Heart left ventricle (tissue), 16 donors: ENCODE measurements at regions of chr22 and their contacts with region 1.

Region 1: DNA sequence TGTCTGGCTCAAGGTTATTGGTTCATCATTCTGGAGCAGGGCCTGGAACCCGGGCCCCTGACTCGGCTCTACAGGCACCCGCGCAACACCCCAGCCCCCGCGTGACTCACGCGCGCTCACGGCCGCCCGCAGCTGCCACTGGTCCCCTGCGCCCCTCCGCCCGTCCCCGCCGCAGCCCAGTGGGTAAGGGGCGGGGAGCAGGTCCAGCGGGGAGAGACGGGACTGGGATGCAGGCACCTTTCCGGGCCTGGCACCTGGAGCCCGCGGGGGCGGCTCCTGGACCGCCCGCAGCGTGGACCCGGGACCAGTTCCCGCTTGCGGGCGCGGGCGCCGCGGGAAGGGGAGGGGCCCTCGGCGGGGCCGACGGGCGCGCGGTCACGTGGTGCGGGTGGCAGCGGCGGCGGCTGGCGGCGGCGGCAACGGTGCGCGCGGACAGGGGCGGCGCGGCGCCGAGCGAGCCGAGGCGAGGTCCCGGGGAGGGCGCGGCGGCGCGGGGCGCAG is 7.2 kb downstream of the SEPTIN3 start:
- DNase-seq: peak in 3 of 5 donors; percentile 27 to 66 (median 40)
- ATAC-seq: peak in 2 of 4 donors; percentile 41 to 74
- H3K4me3 ChIP-seq: peak overlapping the region; percentile 10 to 61 (median 42)
- H3K27ac ChIP-seq: no peak overlapping the region
- H3K4me1 ChIP-seq: peaks cover 0 to 12% (median 3%) of the 10 kb centered on the region in 12 donors
- H3K27me3 ChIP-seq: peaks cover 4 to 58% (median 31%) of the 10 kb centered on the region in 9 donors
- CTCF ChIP-seq: no peak
- POLR2A ChIP-seq: no peak

Region 2: GRCh38 chr22:41417622-41418390 is 558.6 kb before region 1 on chr22:
- intact Hi-C with region 1: no loop called
- DNase-seq: peak; percentile 89 to 97 (median 93)
- ATAC-seq: peak; percentile 73 to 88 (median 87)
- H3K4me3 ChIP-seq: peak overlapping the region in 1 of 12 donors; percentile 13
- H3K27ac ChIP-seq: peak overlapping the region; percentile 45 to 99 (median 92)
- H3K4me1 ChIP-seq: peaks cover 2 to 57% (median 34%) of the 10 kb centered on the region in 12 donors
- H3K27me3 ChIP-seq: no peaks in the 10 kb centered on the region
- CTCF ChIP-seq: no peak
- POLR2A ChIP-seq: peak in 1 of 2 donors; percentile 42

Region 3: GRCh38 chr22:41910050-41911000 is 66.1 kb before region 1 on chr22:
- intact Hi-C with region 1: no loop called
- DNase-seq: peak in 3 of 5 donors; percentile 50 to 72 (median 66)
- ATAC-seq: peak; percentile 43 to 76 (median 60)
- H3K4me3 ChIP-seq: peak overlapping the region; percentile 22 to 57 (median 42)
- H3K27ac ChIP-seq: peak overlapping the region in 5 of 12 donors; percentile 17 to 75 (median 58)
- H3K4me1 ChIP-seq: peaks cover 0 to 52% (median 17%) of the 10 kb centered on the region in 12 donors
- H3K27me3 ChIP-seq: peaks cover 21 to 57% (median 38%) of the 10 kb centered on the region in 9 donors
- CTCF ChIP-seq: no peak
- POLR2A ChIP-seq: no peak

Region 4: GRCh38 chr22:42061041-42061440 is 84.6 kb after region 1 on chr22:
- intact Hi-C with region 1: no loop called
- DNase-seq: no peak
- ATAC-seq: no peak
- H3K4me3 ChIP-seq: no peak overlapping the region
- H3K27ac ChIP-seq: no peak overlapping the region
- H3K4me1 ChIP-seq: no peaks in the 10 kb centered on the region
- H3K27me3 ChIP-seq: no peaks in the 10 kb centered on the region
- CTCF ChIP-seq: no peak
- POLR2A ChIP-seq: no peak

Region 5: GRCh38 chr22:42473484-42474193 is 497.2 kb after region 1 on chr22:
- intact Hi-C with region 1: loop called in 1 of 10 experiments (anchors 10 kb)
- DNase-seq: peak in 1 of 5 donors; percentile 17
- ATAC-seq: peak in 1 of 4 donors; percentile 59
- H3K4me3 ChIP-seq: no peak overlapping the region
- H3K27ac ChIP-seq: no peak overlapping the region
- H3K4me1 ChIP-seq: no peaks in the 10 kb centered on the region
- H3K27me3 ChIP-seq: no peaks in the 10 kb centered on the region
- CTCF ChIP-seq: peak; percentile 41 to 71 (median 62)
- POLR2A ChIP-seq: no peak